OCI-LY7 (cell line): ENCODE measurements at regions of chr14 and their contacts with region 1.

Region 1: DNA sequence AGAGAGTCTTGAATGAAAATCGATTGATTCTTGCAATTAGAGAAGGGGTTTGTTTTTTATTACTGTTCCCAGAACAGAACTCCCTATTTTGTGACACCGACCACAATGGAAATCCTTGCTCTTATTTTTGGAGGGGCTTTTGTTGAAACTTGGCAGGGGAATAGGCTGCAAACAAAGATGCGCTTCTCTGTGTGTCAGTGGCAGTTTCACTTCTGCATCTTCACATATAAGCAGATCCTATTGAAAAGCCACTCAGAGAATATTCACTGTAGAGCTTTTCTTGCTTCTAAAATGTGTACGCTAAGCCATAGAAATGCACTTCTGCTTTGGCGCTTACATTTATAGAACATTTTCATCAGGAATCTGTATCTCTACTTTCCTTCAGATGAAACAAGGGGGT is 1822.4 kb upstream of the SEL1L start:
- DNase-seq: peak; percentile 59
- H3K4me3 ChIP-seq: peak overlapping the region; percentile 29
- H3K27ac ChIP-seq: peak overlapping the region; percentile 69
- H3K4me1 ChIP-seq: peaks cover 36% of the 10 kb centered on the region
- CTCF ChIP-seq: no peak

Region 2: DNA sequence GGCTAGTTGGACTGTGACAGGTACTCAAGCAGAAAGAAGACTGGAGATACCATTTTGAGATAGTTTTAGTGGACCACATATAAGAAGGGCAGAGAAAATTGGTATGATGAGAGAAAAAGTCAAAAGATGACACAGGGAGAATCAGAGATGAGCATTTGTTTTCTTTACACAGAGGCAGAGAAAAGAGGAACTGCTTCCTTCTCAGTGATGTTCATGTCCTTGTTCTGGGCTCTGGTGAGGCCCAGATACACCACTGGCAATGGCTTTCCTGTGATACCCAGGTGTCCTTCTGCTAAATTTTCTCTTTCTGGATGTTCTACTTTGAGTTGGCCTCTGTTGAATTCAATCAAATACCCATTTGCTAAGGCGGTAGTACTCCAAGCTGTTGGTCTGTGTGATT is 39.7 kb before region 1 on chr14:
- CTCF ChIA-PET with region 1: no interaction called
- POLR2A ChIA-PET with region 1: interaction called, 3 read pairs
- intact Hi-C with region 1: loop called (anchors 5 kb)
- DNase-seq: peak; percentile 22
- H3K4me3 ChIP-seq: no peak overlapping the region
- H3K27ac ChIP-seq: no peak overlapping the region
- H3K4me1 ChIP-seq: peaks cover 13% of the 10 kb centered on the region
- CTCF ChIP-seq: no peak